ENCODE measurements at regions of chr9 and their contacts with region 1.

Region 1: GRCh38 chr9:104544644-104545043 is 8.0 kb upstream of the OR13C3 start:
- DNase-seq: no peak
- ATAC-seq: no peak
- H3K4me3 ChIP-seq: no peak overlapping the region
- H3K27ac ChIP-seq: no peak overlapping the region
- H3K4me1 ChIP-seq: no peaks in the 10 kb centered on the region
- H3K27me3 ChIP-seq: no peaks in the 10 kb centered on the region
- CTCF ChIP-seq: no peak
- EP300 ChIP-seq: no peak
- POLR2A ChIP-seq: no peak
- RAD21 ChIP-seq: no peak

Region 2: DNA sequence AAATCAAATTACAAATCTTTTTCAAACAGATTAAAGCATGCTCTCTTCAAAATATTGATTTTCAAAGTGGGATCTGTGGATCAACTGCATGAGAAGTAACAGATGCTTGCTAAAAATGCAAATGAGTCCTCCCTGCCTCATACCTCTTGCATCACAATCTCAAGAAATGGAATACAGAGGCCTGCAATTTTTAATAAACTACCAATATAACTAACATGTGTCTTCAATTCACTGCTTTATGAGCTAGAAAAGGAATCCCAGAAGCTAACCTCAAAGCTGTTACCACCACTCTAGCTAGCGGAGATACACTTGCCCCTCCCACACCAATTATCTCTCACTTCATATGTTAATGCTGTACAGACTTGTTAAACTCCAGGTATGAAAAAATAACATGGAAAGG is 45.0 kb after region 1 on chr9:
- CTCF ChIA-PET with region 1: no interaction called
- POLR2A ChIA-PET with region 1: no interaction called
- in situ Hi-C with region 1: no loop called
- intact Hi-C with region 1: loop called (anchors 5 kb)
- DNase-seq: no peak
- ATAC-seq: no peak
- H3K4me3 ChIP-seq: no peak overlapping the region
- H3K27ac ChIP-seq: no peak overlapping the region
- H3K4me1 ChIP-seq: no peaks in the 10 kb centered on the region
- H3K27me3 ChIP-seq: no peaks in the 10 kb centered on the region
- CTCF ChIP-seq: no peak
- EP300 ChIP-seq: no peak
- POLR2A ChIP-seq: no peak
- RAD21 ChIP-seq: no peak

Measured in HepG2 (cell line).